HCT116 (cell line): ENCODE measurements at regions of chr15 and their contacts with region 1.

Region 1: DNA sequence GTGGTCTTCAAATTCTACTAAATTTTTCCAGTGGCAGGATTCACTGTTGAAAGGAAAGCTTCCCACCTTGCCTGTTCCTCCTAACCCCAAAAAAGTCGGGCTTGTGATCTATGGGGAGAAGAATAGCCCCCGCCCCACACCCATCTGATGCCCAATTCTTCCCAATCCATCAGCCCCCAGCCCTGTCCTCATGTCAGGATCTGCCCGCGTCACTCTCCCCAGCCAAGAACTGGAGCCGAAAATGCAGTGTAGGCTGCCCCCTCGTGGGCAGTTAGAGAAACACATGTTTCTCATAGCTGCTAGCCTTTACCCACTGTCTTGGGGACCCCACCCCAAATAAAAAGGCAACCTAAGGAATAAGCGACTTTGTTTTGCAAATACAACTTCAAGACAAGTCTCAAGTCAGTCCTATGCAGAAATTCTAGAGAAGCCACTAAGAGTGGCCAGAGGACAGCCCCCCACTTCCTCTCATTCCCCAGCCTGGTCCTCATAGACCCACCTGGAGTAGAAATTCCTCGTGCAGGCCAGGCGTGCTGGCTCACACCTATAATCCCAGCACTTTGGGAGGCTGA is 13.0 kb upstream of the CSK start:
- DNase-seq: peak; percentile 42
- ATAC-seq: peak; percentile 67
- H3K4me3 ChIP-seq: peak overlapping the region; percentile 22 to 36; a peak in 3 of 4 replicates
- H3K27ac ChIP-seq: no peak overlapping the region
- H3K4me1 ChIP-seq: peaks cover 2 to 16% of the 10 kb centered on the region in 2 experiments; a peak in 3 of 4 replicates
- H3K27me3 ChIP-seq: no peaks in the 10 kb centered on the region
- CTCF ChIP-seq: peak; percentile 70 to 93 (median 90)
- POLR2A ChIP-seq: no peak
- RAD21 ChIP-seq: peak; percentile 94

Region 2: DNA sequence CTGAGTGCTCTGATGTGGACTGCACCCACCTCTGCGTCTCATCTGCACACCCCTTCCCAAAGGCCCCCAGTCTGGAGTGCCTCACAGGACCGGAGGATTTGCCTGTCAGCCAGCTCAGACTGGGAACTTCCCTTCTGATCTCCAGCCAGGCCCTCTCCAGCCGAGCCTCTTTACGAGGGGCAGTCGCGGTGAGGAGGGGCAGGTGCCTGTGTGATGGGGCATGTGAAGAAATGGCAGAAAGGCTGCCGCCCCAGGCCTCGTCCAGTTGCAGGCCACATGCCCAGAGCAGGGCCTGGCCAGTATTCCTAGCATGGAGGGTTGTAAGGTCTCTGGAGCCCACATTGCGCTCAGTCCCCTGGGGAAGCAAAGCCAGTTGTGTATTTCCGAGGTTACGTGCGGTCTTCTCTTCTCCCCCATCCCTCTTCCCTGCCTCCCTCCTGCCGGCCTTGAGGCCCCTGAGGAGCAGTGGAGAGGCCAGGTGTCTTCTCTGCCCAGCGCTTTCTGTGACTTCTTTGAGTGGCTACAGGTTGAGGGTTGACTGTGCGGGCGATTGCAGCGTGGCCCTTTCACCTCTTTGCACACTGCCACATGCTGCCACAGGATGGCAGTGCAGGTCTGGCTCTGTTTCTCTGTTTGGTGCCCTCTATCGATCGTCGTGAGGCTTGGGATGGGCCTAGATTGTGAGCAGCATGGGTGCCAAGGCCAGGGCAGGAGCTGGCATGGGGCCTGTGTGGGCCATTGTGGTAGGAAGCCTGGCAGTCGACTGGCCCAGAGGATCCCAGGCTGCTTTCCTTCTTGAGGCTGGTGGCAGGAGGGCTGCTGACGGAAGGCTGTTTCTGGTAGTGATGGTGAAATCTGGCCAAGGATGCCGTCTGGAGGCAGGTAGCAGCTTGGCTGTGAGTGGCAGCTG is 148.0 kb before region 1 on chr15:
- CTCF ChIA-PET with region 1: interaction called, 33 read pairs
- POLR2A ChIA-PET with region 1: interaction called, 3 read pairs
- RAD21 ChIA-PET with region 1: interaction called in 1 of 2 experiments, 3 read pairs
- intact Hi-C with region 1: no loop called
- DNase-seq: peak; percentile 77
- ATAC-seq: peak; percentile 90
- H3K4me3 ChIP-seq: no peak overlapping the region
- H3K27ac ChIP-seq: no peak overlapping the region; the same call in 1 of the 2 replicates
- H3K4me1 ChIP-seq: peaks cover 5 to 22% of the 10 kb centered on the region in 2 experiments; a peak in 3 of 4 replicates
- H3K27me3 ChIP-seq: no peaks in the 10 kb centered on the region
- CTCF ChIP-seq: peak in 2 of 3 experiments; percentile 99; a peak in 4 of 6 replicates
- POLR2A ChIP-seq: no peak
- RAD21 ChIP-seq: no peak

Region 3: DNA sequence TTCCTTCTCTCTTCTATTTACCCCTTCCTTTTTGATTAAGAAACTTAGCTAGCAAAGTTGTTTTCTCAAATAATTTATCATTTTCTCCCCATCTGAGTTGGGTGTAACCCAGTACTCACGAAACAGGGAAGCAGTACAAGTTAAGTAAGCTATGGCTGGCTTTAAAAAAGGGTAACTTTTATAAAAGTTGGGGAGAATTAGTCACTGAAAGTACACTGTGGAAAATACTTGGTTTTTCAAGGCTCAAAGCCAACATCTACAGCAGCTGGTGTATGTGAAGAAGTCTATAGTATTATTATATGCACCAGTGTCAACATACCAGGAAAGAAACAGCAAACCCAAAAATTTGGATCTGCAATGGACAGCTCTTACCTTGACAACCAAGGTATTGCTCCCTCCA is 127.7 kb before region 1 on chr15:
- CTCF ChIA-PET with region 1: interaction called, 258 read pairs
- POLR2A ChIA-PET with region 1: no interaction called
- RAD21 ChIA-PET with region 1: interaction called, 3 to 4 read pairs
- intact Hi-C with region 1: no loop called
- DNase-seq: no peak
- ATAC-seq: no peak
- H3K4me3 ChIP-seq: no peak overlapping the region
- H3K27ac ChIP-seq: no peak overlapping the region
- H3K4me1 ChIP-seq: no peaks in the 10 kb centered on the region
- H3K27me3 ChIP-seq: no peaks in the 10 kb centered on the region
- CTCF ChIP-seq: no peak
- POLR2A ChIP-seq: no peak
- RAD21 ChIP-seq: no peak

Region 4: DNA sequence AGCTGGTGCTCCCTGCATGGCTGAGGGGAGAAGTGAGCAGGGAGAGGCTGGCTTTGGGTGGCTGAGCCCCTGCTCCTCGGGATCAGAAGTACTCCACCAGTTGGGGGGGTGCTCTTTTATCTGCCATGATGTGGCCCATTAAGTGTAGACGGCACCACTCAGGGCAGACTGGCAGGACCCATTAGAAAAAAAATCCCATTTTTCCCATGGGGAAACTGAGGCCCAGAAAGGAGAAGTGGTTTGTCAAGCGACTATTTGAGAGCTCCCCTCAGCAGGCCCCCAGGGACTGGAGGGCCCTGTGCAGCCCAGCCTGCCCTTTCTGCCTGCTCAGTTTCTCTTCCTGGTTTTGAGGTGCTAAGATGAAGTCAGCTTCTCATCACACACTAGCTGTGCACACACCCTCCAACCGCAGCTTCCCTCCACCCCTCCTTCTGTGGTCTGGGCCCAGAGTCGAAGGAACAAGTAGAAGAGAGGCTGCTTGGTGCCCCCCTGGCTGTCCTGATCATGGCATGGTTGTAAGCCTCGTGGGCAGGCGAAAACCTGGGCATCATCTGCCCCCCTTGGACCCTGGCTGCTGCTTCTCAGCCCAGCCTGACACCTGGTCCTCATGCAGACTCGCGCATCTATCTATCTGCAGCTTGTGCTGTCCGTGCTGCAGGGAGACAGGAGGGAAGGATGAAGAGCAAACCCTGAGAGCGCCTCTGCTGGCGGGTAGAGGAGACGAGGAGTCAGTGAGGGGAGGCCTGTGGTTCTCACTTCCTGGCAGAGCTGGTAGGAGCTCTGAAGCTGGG is 18.6 kb after region 1 on chr15:
- CTCF ChIA-PET with region 1: interaction called, 12 read pairs
- POLR2A ChIA-PET with region 1: no interaction called
- RAD21 ChIA-PET with region 1: no interaction called
- intact Hi-C with region 1: no loop called
- DNase-seq: no peak
- ATAC-seq: peak; percentile 69
- H3K4me3 ChIP-seq: no peak overlapping the region
- H3K27ac ChIP-seq: no peak overlapping the region; the same call in 1 of the 2 replicates
- H3K4me1 ChIP-seq: peaks cover 20 to 42% of the 10 kb centered on the region in 2 experiments
- H3K27me3 ChIP-seq: no peaks in the 10 kb centered on the region
- CTCF ChIP-seq: peak in 2 of 3 experiments; percentile 50 to 52; a peak in 4 of 6 replicates
- POLR2A ChIP-seq: no peak
- RAD21 ChIP-seq: no peak

Region 5: DNA sequence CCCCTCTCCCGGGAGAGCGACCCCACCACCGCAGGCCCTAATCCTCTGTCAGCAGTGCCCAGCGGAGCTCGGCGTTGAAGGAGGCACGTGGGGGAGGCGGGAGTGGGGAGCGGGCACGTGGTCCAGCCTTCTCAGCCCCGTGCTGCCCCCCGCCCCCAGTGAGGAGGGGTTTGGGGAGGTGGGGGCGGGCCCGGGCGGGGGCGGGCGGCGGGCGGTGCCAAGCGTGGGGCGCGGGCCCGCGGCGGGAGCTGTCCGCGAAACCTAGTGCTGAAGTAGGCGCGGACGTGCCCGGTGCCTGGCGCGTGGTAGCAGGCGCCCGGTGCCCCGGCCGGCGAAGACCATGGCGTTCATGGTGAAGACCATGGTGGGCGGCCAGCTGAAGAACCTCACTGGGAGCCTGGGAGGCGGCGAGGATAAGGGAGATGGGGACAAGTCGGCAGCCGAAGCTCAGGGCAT is 57.5 kb after region 1 on chr15 and contains the start of gene CPLX3:
- CTCF ChIA-PET with region 1: interaction called, 14 read pairs
- POLR2A ChIA-PET with region 1: no interaction called
- RAD21 ChIA-PET with region 1: no interaction called
- intact Hi-C with region 1: no loop called
- DNase-seq: no peak
- ATAC-seq: peak; percentile 63
- H3K4me3 ChIP-seq: no peak within 1 kb of the TSS
- H3K27ac ChIP-seq: no peak within 1 kb of the TSS
- H3K4me1 ChIP-seq: no peaks in the 10 kb centered on the region
- H3K27me3 ChIP-seq: peaks cover 21% of the 10 kb centered on the region; the same call in 1 of the 2 replicates
- CTCF ChIP-seq: no peak
- POLR2A ChIP-seq: no peak
- RAD21 ChIP-seq: no peak
- total RNA-seq, gene CPLX3: not detected

Region 6: GRCh38 chr15:74906446-74907162 is 137.7 kb after region 1 on chr15 and contains the start of gene FAM219B:
- CTCF ChIA-PET with region 1: interaction called, 32 read pairs
- POLR2A ChIA-PET with region 1: no interaction called
- RAD21 ChIA-PET with region 1: interaction called, 4 to 5 read pairs
- intact Hi-C with region 1: loop called (anchors 1 kb)
- DNase-seq: peak; percentile 65
- ATAC-seq: peak; percentile 90
- H3K4me3 ChIP-seq: peak within 1 kb of the TSS; percentile 73 to 96
- H3K27ac ChIP-seq: peak within 1 kb of the TSS; percentile 89
- H3K4me1 ChIP-seq: peaks cover 10 to 17% of the 10 kb centered on the region in 2 experiments; a peak in 2 of 4 replicates
- H3K27me3 ChIP-seq: no peaks in the 10 kb centered on the region
- CTCF ChIP-seq: no peak
- POLR2A ChIP-seq: peak; percentile 89
- RAD21 ChIP-seq: no peak
- total RNA-seq, gene FAM219B: 64.3 TPM

Region 7: DNA sequence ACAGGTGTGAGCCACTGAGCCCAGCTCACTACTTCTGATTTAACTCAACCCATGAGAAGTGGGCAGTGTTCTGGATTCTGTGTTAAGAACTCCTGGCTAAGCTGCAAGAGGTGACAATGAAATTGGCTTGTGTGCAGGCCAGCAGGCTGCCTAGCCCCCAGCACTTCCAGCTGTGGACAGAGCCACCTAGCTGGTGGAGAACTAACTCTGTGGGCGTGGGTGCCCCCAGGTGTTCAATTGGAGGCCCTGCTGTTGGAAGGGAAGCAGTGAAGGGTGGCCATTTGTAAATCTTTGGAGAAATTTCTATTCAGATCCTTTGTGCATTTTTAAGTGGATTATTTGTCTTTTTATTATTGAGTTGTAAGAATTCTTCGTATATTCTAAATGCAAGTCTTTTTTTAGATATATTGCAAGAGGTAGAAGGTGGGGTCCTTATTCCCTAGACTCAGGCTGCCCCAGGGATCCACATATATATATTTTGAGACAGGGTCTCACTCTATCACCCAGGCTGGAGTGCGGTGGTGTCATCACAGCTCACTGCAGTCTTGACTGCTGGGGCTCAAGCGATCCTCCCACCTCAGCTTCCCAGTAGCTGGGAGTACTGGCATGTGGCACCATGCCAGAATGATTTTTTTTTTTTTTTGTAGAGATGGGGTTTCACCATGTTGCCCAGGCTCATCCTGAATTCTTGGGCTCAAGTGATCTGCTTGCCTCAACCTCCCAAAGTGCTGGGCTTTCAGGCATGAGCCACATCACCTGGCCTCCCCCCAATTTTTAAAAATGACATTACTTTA is 219.3 kb after region 1 on chr15:
- CTCF ChIA-PET with region 1: interaction called, 21 read pairs
- POLR2A ChIA-PET with region 1: no interaction called
- RAD21 ChIA-PET with region 1: interaction called in 1 of 2 experiments, 5 read pairs
- intact Hi-C with region 1: loop called (anchors 1 kb)
- DNase-seq: peak; percentile 41
- ATAC-seq: peak; percentile 99
- H3K4me3 ChIP-seq: no peak overlapping the region
- H3K27ac ChIP-seq: no peak overlapping the region
- H3K4me1 ChIP-seq: peaks cover 10 to 11% of the 10 kb centered on the region in 2 experiments
- H3K27me3 ChIP-seq: 0 out of 2 replicates have a peak, but pooled peaks cover 4% of the 10 kb centered on the region
- CTCF ChIP-seq: peak; percentile 82 to 88 (median 85)
- POLR2A ChIP-seq: no peak
- RAD21 ChIP-seq: peak; percentile 89

Region 8: GRCh38 chr15:75049392-75049791 is 280.5 kb after region 1 on chr15:
- CTCF ChIA-PET with region 1: no interaction called
- POLR2A ChIA-PET with region 1: no interaction called
- RAD21 ChIA-PET with region 1: no interaction called
- intact Hi-C with region 1: no loop called
- DNase-seq: no peak
- ATAC-seq: no peak
- H3K4me3 ChIP-seq: no peak overlapping the region
- H3K27ac ChIP-seq: no peak overlapping the region
- H3K4me1 ChIP-seq: peaks cover 13 to 15% of the 10 kb centered on the region in 2 experiments; a peak in 3 of 4 replicates
- H3K27me3 ChIP-seq: no peaks in the 10 kb centered on the region
- CTCF ChIP-seq: no peak
- POLR2A ChIP-seq: no peak
- RAD21 ChIP-seq: no peak